ENCODE measurements at regions of chr10 and their contacts with region 1.

Region 1: DNA sequence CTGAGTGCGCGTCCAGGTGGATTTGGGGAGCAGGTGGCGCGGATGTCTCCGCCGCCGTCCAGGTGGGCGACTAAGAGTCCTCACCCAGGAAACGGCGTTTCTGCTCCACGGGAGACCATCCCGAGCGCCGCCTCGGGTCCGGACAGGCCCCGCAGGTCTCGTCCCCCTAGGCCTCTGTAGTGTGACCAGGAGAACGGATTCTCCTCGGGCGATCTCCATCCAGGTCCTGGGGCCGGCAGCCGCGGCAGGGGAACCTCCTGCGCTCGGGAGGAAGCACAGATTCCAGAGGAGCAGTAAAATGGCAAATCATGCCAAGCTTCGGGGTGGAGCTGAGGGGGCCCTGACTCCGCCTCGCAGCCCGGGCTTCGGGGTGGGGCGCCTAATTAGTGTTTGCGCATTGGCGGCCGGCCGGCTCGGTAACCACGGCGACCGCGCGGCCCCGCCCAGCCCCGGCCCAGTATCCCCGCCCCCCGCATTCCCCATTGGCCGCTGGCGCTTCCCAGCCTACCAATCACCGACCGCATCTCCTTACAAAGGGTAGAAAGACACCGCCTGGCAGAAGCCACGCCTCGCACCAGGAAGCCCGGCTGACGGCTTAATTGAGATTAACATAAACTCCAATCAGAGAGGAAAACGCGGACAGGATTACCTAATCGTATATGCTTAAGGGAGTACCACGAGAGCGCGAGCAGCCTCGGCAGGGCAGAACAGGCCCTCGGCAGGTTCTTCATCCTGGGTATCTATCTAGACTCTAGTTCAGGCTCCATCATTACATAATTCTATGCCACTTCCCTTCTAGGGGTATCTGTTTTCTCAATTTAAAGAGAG is 168.6 kb downstream of the ARHGAP12 start:
- DNase-seq: peak; percentile 97
- ATAC-seq: peak; percentile 94
- H3K4me3 Mint-ChIP-seq: peak overlapping the region; percentile 91
- H3K27ac Mint-ChIP-seq: peak overlapping the region; percentile 94
- H3K4me1 Mint-ChIP-seq: peaks cover 15% of the 10 kb centered on the region
- H3K27me3 Mint-ChIP-seq: no peaks in the 10 kb centered on the region

Region 2: GRCh38 chr10:31603235-31604087 is 156.6 kb before region 1 on chr10:
- CTCF ChIA-PET with region 1: no interaction called
- POLR2A ChIA-PET with region 1: no interaction called
- intact Hi-C with region 1: loop called (anchors 1 kb)
- DNase-seq: peak; percentile 94
- ATAC-seq: peak; percentile 92
- H3K4me3 Mint-ChIP-seq: peak overlapping the region; percentile 76
- H3K27ac Mint-ChIP-seq: peak overlapping the region; percentile 17
- H3K4me1 Mint-ChIP-seq: peaks cover 33% of the 10 kb centered on the region
- H3K27me3 Mint-ChIP-seq: peaks cover 2% of the 10 kb centered on the region

Region 3: GRCh38 chr10:31745612-31746376 is 14.2 kb before region 1 on chr10:
- CTCF ChIA-PET with region 1: interaction called, 6 read pairs
- POLR2A ChIA-PET with region 1: interaction called, 12 read pairs
- intact Hi-C with region 1: loop called (anchors 1 kb)
- DNase-seq: peak; percentile 75
- ATAC-seq: peak; percentile 98
- H3K4me3 Mint-ChIP-seq: no peak overlapping the region
- H3K27ac Mint-ChIP-seq: peak overlapping the region; percentile 91
- H3K4me1 Mint-ChIP-seq: peaks cover 34% of the 10 kb centered on the region
- H3K27me3 Mint-ChIP-seq: no peaks in the 10 kb centered on the region

Region 4: GRCh38 chr10:32131388-32131787 is 371.4 kb after region 1 on chr10:
- CTCF ChIA-PET with region 1: no interaction called
- POLR2A ChIA-PET with region 1: no interaction called
- intact Hi-C with region 1: no loop called
- DNase-seq: no peak
- ATAC-seq: no peak
- H3K4me3 Mint-ChIP-seq: no peak overlapping the region
- H3K27ac Mint-ChIP-seq: no peak overlapping the region
- H3K4me1 Mint-ChIP-seq: peaks cover 9% of the 10 kb centered on the region
- H3K27me3 Mint-ChIP-seq: no peaks in the 10 kb centered on the region

Measured in activated CD4-positive, alpha-beta T cell treated with anti-CD3 and anti-CD28 coated beads for 36 hours (primary cell).